Heart right ventricle (tissue), 16 donors: ENCODE measurements at regions of chr1 and their contacts with region 1.

Region 1: GRCh38 chr1:19715334-19716203 is 50.9 kb downstream of the HTR6 start:
- DNase-seq: peak; percentile 76 to 84
- ATAC-seq: peak; percentile 58 to 94 (median 88)
- H3K4me3 ChIP-seq: no peak overlapping the region
- H3K27ac ChIP-seq: no peak overlapping the region
- H3K4me1 ChIP-seq: no peaks in the 10 kb centered on the region
- H3K27me3 ChIP-seq: no peaks in the 10 kb centered on the region
- CTCF ChIP-seq: peak; percentile 58 to 87 (median 75)

Region 2: DNA sequence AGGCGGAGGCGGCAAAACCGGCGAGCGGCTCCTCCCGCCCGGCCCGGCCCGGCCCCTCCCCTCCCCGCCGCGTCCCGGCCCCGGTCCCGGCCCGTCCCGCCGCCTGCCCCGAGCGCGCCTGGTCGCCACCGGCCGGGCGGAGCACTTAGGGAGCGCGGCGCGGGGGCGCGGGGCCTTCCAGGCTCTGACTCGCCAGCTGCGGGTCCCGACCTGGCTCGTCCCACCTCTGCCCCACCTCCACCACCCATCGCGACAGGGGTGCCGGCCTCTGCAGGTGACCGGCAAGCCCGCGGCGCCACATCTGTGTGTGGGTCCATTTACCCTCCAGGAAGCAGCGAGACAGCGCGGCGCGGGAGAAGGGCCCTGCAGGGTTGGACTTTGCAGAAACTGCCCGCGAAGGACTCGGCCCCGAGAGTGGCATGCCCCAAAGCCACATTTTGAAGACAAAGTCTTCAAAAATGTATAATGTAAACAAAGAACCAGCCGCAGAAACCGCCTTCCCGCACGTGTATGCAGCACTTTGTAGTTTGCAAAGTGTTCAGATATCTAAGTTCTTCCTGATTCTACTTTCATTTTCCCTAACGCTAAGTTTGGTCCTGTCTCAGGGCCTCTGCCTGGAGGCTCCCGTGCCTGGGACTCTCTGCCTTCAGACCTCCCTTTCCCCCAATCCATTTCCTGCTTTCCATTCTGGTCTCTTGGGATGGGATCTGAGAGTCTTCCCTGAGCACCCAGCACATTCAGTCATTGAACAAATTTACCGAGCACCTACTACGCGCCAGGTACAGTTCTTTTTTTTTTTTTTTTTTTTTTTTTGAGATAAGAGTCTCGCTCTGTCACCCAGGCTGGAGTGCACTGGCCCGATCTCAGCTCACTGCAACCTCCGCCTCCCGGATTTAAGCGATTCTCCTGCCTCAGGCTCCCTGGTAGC is 84.6 kb after region 1 on chr1 and contains the start of gene TMCO4:
- intact Hi-C with region 1: loop called in 1 of 10 experiments (anchors 10 kb)
- DNase-seq: peak; percentile 19 to 56
- ATAC-seq: peak; percentile 60 to 86 (median 74)
- H3K4me3 ChIP-seq: peak within 1 kb of the TSS; percentile 47 to 84 (median 74)
- H3K27ac ChIP-seq: peak within 1 kb of the TSS; percentile 59 to 91 (median 78)
- H3K4me1 ChIP-seq: peaks cover 0 to 20% (median 15%) of the 10 kb centered on the region in 9 donors
- H3K27me3 ChIP-seq: peaks cover 0 to 6% (median 0%) of the 10 kb centered on the region in 7 donors
- CTCF ChIP-seq: peak in 1 of 9 donors; percentile 3
- total RNA-seq, gene TMCO4: 6.6 to 9.7 (median 8.0) TPM